Left ventricle myocardium superior (tissue), 1 donor: ENCODE measurements at regions of chr4 and their contacts with region 1.

Region 1: GRCh38 chr4:142883040-142883832 is 37.1 kb upstream of the INPP4B start:
- DNase-seq: no peak
- ATAC-seq: peak; percentile 30

Region 2: DNA sequence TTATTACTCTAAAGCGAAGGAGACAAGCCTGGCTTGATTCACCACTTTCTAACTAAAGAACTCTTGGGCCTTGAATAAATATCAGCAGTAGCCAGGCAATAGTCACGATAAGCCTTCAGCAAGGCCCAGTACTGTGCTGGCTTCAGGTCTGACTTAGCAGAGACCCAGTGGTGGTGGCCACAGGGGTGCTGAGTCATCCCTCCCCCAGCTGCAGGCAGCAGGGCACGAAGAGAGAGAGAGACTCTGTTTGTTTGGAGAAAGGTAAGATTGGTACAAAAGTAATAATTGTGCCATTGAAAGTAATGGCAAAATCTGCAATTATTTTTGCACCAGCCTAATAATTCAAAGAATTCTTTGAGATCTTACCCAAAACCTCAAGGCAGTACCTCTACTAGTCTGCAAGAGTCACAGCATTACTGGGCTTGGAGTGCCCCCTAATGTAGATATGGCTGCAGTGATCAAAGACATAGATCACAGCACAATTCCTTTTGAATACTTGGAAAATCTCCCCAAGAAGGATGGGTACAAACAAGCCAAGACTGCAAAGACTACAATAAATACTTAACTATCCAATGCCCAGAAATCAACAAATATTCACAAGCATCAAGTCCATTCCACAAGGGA is 142.0 kb after region 1 on chr4:
- intact Hi-C with region 1: loop called (anchors 5 kb)
- DNase-seq: no peak
- ATAC-seq: peak; percentile 59